Activated T-helper 1 cell treated with anti-CD3 and anti-CD28 coated beads, Interleukin-12 subunit alpha, Interleukin-12 subunit beta, Interleukin-2, Interleukin-4 antibody, amounts not matched to agents 30 ng/mL and 10 ng/mL and 1 ng/mL, durations not matched to agents 14 hours and 24 hours and 36 hours (primary cell): ENCODE measurements at regions of chr11 and their contacts with region 1.

Region 1: DNA sequence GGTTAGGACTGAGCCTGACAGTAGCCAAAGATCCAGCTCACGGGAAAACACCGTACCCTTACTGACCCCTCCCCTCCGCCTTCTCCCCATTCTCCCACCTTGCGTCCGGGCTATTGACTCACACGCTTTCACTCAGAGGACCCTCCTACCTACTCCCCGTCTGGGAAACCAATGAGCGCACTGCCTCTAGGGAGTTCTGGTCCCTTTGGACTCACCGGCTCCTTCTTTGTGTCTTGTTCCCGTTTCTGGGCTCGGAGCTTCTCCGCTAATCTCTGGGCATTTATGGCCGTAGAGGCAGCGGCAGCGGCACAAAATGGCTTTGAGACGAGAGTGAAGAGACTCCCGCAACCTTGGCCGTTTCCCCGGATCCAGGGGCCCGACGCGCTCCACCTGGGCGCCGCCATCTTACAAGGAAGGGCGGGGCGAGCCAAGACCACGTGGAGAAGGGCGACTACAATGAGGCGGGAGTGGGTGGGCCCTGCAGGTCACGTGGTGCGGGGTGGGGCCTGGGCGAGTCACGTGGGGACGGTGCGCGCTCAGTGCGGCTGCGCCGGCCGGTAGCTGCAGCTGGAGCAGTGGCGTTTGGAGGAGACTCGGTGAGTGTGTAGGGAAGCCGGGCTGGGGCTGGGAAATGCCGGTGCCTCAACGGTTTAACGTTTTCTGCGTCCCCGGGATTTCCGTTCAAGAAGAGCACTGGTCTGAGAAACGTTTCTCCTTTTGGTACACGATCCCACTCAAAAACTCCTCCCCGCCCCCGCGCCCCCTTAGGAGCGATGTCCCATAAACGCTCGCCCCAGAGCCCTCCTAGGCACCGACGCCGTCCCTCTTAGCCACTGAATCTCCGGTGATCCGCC is at the starts of genes FAM118B and RPUSD4:
- DNase-seq: peak; percentile 98
- H3K4me3 Mint-ChIP-seq: peak within 1 kb of the TSS; percentile 99
- H3K27ac Mint-ChIP-seq: peak within 1 kb of the TSS; percentile 98
- H3K4me1 Mint-ChIP-seq: peaks cover 34% of the 10 kb centered on the region
- H3K27me3 Mint-ChIP-seq: no peaks in the 10 kb centered on the region
- total RNA-seq, gene FAM118B: 13.2 and 16.4 TPM in 2 replicates
- total RNA-seq, gene RPUSD4: 49.2 and 49.8 TPM in 2 replicates

Region 2: DNA sequence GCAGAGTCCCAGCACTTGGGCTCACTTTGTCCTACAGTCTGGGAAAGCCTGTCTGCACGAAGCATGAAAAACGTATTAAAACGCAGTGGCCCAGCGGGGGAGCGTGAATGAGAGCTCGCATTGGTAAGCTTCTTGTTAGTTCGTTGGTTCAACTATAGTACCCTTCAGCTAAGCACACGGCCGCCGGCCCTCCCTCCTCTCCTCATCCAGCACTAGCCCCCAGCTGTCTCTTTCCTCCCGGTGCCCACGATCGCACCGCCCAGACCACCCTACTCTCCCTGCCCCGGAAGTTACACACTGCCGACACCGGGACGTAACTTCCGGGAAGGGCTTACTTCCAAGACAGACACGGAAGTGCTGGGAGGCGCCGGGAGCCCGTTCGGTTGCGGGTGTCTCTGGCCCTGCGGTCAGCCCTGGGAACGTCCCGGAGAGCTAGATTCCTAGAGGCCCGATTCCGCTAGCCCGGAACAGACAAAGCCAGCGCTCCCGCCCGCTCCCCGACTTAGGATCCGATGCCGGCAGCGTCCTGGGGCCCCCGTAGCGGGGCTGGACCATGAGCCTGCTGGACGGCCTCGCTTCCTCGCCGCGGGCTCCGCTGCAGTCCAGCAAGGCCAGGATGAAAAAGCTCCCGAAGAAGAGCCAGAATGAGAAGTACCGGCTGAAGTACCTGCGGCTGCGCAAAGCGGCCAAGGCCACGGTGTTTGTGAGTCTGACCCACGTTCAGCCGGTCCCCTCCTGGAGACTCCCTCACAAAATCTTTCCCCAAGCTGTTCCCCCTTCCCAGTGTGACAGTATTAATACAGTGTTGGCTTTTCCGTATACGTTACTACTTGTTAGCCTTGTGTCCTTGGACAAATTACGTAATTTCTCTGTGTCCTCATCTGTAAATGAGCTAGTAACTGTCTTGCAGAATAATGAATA is 1588.7 kb before region 1 on chr11 and contains the start of gene TBRG1:
- intact Hi-C with region 1: loop called (anchors 2 kb)
- DNase-seq: peak; percentile 80
- H3K4me3 Mint-ChIP-seq: peak within 1 kb of the TSS; percentile 97
- H3K27ac Mint-ChIP-seq: peak within 1 kb of the TSS; percentile 95
- H3K4me1 Mint-ChIP-seq: peaks cover 29% of the 10 kb centered on the region
- H3K27me3 Mint-ChIP-seq: peaks cover 14% of the 10 kb centered on the region
- total RNA-seq, gene TBRG1: 35.1 and 35.4 TPM in 2 replicates

Region 3: DNA sequence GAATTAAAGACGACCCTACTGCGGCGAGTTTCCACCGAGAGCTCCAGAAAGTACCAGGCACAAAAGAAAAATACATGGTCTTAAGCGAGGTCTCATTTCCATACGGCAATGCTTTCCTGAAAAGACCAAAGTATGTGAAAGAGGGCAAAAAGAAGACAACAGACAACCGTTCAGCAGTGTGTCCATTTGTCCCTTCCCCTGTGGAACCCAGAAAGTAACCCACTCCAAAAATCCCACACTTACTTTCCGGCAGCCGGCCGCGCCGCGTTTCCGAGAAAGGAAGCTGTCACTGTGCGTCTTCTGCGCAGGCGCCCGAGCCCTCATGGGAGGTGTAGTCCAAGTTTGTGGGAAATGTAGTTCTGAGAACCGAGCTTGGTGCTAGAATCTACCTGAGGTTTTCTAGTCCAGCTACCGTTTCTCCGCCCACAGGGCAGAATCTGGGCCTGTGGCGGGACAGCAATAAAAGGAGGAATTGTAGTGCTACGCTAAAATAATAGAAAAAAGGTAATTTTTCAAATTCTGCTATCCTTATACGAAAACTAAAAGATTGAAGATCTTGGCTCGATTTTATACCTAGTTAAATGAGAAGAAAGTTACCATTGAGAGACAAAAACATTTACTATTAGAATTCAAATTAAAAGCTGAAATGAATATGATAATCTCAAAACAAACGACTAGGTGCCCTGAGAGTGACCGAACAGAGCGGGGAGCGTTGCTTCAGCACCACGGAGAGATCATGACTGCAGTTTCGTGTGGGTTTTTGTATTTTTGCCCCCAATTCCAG is 308.3 kb before region 1 on chr11 and contains the start of gene PUS3:
- intact Hi-C with region 1: loop called (anchors 1 kb)
- DNase-seq: peak; percentile 85
- H3K4me3 Mint-ChIP-seq: peak within 1 kb of the TSS; percentile 98
- H3K27ac Mint-ChIP-seq: peak within 1 kb of the TSS; percentile 88
- H3K4me1 Mint-ChIP-seq: peaks cover 28% of the 10 kb centered on the region
- H3K27me3 Mint-ChIP-seq: peaks cover 34% of the 10 kb centered on the region
- total RNA-seq, gene PUS3: 16.5 and 23.6 TPM in 2 replicates

Region 4: GRCh38 chr11:126268708-126269579 is 57.5 kb after region 1 on chr11 and contains the starts of genes FOXRED1 and SRPRA:
- intact Hi-C with region 1: loop called (anchors 1 kb)
- DNase-seq: peak; percentile 100
- H3K4me3 Mint-ChIP-seq: peak within 1 kb of the TSS; percentile 99
- H3K27ac Mint-ChIP-seq: peak within 1 kb of the TSS; percentile 96
- H3K4me1 Mint-ChIP-seq: peaks cover 45% of the 10 kb centered on the region
- H3K27me3 Mint-ChIP-seq: no peaks in the 10 kb centered on the region
- total RNA-seq, gene FOXRED1: 52.9 and 56.5 TPM in 2 replicates
- total RNA-seq, gene SRPRA: 194 and 195 TPM in 2 replicates

Region 5: DNA sequence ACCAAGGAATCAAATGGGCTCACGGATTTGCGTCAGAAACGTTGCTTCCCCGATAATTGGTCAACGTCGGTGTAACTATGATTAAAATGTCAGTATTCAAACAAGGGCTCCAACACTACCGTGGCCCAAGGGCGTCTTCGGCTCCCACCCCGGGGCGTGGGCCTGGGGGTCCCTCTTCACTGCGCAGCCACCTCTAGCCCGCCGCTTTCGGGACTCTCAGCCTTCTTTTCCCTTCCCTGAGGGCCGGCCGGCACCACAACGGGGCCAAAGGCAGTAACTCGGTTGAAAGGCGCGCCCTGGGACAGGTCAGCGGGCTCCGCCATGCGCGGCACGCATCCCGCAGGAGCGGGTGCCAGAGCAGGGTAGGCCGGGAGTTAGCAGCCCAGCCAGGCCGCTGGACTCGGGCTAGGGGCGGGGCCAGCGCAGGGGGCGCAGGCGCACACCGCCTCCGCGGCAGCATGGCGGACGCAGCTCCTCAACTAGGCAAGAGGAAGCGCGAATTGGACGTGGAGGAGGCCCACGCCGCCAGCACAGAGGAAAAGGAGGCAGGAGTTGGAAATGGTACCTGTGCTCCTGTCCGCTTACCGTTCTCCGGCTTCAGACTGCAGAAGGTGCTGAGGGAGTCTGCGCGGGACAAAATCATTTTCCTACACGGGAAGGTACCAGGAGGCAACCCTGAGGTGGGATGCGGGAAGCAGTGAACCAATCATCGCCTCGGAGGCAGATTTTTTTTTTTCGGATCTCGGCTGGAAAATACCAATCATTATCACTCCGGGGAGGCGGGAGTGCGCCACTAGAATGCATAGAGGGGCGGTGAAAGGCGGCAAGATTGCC is 92.4 kb after region 1 on chr11 and contains the start of gene DCPS:
- intact Hi-C with region 1: loop called (anchors 1 kb)
- DNase-seq: peak; percentile 88
- H3K4me3 Mint-ChIP-seq: peak within 1 kb of the TSS; percentile 98
- H3K27ac Mint-ChIP-seq: peak within 1 kb of the TSS; percentile 98
- H3K4me1 Mint-ChIP-seq: peaks cover 35% of the 10 kb centered on the region
- H3K27me3 Mint-ChIP-seq: no peaks in the 10 kb centered on the region
- total RNA-seq, gene DCPS: 40.4 and 40.5 TPM in 2 replicates

Region 6: DNA sequence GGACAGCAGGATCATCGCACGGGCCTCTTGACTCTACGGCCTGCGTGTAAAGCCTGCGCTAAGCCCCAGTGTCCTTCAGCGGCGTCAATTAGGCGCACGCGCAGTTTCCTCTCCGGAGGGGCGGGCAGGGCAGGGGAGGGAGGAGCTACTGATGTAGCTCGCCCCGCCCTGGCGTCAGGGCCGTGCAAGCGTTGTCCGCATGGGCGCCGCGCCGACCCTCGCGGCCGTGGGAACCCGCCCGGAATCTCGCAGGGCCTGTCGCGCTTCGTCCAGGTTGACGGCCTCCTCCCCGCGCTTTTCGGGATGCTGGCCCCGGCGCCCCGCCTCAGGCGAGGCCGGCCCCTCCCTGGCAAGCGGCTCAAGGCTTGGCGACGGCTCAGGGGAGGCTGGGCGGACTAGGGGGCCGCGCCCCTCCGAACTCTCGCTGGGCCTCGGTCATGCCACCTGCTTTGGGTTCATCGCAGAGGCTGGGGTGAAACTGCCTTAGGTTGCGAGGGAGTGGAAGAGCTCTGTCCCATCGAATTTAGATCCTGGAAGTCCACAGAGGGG is 205.2 kb after region 1 on chr11:
- intact Hi-C with region 1: loop called (anchors 2 kb)
- DNase-seq: peak; percentile 59
- H3K4me3 Mint-ChIP-seq: peak overlapping the region; percentile 62
- H3K27ac Mint-ChIP-seq: no peak overlapping the region
- H3K4me1 Mint-ChIP-seq: peaks cover 17% of the 10 kb centered on the region
- H3K27me3 Mint-ChIP-seq: peaks cover 5% of the 10 kb centered on the region